ENCODE measurements at regions of chr13 and their contacts with region 1.

Region 1: DNA sequence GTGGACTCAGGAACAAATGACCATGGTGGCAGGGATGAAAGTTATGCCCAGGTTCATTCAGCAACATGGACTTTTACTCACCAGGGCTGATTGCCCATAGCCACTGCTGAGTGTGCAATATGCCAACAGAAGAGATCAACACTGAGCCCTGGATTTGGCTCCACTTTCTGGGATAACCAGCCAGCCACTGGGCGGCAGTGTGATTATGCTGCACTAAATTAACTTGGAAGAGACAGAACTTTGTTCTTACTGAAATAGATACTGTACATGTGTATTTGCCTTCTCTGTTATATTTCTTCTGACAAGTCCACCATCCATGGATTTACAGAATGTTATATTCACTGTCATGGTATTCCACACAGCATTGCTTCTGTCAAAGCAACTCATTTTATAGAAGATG is 257.4 kb downstream of the TDRD3 start:
- DNase-seq: peak in 1 of 2 experiments; percentile 42
- H3K4me3 ChIP-seq: no peak overlapping the region
- H3K4me3 Mint-ChIP-seq: no peak overlapping the region
- H3K27ac Mint-ChIP-seq: no peak overlapping the region
- H3K4me1 ChIP-seq: no peaks in the 10 kb centered on the region
- H3K4me1 Mint-ChIP-seq: no peaks in the 10 kb centered on the region
- H3K27me3 ChIP-seq: no peaks in the 10 kb centered on the region; the same call in 1 of the 2 replicates
- H3K27me3 Mint-ChIP-seq: peaks cover 20% of the 10 kb centered on the region
- CTCF ChIP-seq: peak; percentile 58 to 77

Region 2: DNA sequence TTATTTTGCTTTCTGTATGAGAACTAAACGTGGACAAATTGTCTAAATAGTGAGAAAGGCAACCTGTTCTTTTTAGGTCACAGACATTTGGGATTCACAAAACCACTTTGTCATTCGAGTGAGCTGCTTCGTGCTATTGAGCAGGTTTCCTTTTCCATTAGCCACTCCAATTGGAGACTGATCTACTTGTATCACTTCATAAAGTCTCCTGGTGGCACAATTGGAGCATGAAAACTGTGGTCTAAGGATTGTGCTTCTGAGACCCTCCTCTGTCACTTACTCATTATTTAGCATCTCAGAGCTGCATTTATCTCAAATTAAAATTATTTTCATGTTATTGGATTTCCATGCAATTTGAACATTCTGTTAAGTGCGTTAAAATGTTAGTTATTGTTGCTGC is 140.3 kb after region 1 on chr13:
- CTCF ChIA-PET with region 1: no interaction called
- POLR2A ChIA-PET with region 1: no interaction called
- intact Hi-C with region 1: loop called (anchors 1 kb)
- DNase-seq: no peak
- H3K4me3 ChIP-seq: no peak overlapping the region
- H3K4me3 Mint-ChIP-seq: no peak overlapping the region
- H3K27ac Mint-ChIP-seq: no peak overlapping the region
- H3K4me1 ChIP-seq: no peaks in the 10 kb centered on the region
- H3K4me1 Mint-ChIP-seq: no peaks in the 10 kb centered on the region
- H3K27me3 ChIP-seq: no peaks in the 10 kb centered on the region
- H3K27me3 Mint-ChIP-seq: no peaks in the 10 kb centered on the region
- CTCF ChIP-seq: no peak

Region 3: GRCh38 chr13:60990032-60990733 is 335.8 kb after region 1 on chr13:
- CTCF ChIA-PET with region 1: no interaction called
- POLR2A ChIA-PET with region 1: no interaction called
- intact Hi-C with region 1: loop called (anchors 1 kb)
- DNase-seq: peak in 1 of 2 experiments; percentile 40
- H3K4me3 ChIP-seq: no peak overlapping the region
- H3K4me3 Mint-ChIP-seq: no peak overlapping the region
- H3K27ac Mint-ChIP-seq: no peak overlapping the region
- H3K4me1 ChIP-seq: no peaks in the 10 kb centered on the region
- H3K4me1 Mint-ChIP-seq: no peaks in the 10 kb centered on the region
- H3K27me3 ChIP-seq: no peaks in the 10 kb centered on the region; the same call in 1 of the 2 replicates
- H3K27me3 Mint-ChIP-seq: no peaks in the 10 kb centered on the region
- CTCF ChIP-seq: peak; percentile 16 to 39

Region 4: DNA sequence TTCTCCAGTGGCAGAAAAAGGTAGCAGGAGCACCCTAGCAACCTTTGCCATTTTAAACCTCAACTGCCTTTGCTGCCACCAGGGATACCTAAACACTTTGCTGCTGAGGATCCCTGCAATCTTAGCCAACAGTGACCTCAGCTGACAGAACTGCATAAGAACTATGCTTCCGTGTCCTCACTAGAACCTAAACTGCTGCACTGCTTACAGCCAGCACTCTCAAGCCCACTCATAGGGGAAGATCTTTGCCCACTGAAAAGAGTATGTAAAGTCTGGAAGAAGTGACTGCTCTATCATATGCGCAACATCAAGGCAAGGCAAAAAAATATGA is 1031.2 kb after region 1 on chr13:
- CTCF ChIA-PET with region 1: no interaction called
- POLR2A ChIA-PET with region 1: no interaction called
- intact Hi-C with region 1: loop called (anchors 1 kb)
- DNase-seq: peak; percentile 48 to 54
- H3K4me3 ChIP-seq: no peak overlapping the region
- H3K4me3 Mint-ChIP-seq: no peak overlapping the region
- H3K27ac Mint-ChIP-seq: no peak overlapping the region
- H3K4me1 ChIP-seq: no peaks in the 10 kb centered on the region
- H3K4me1 Mint-ChIP-seq: no peaks in the 10 kb centered on the region
- H3K27me3 ChIP-seq: no peaks in the 10 kb centered on the region
- H3K27me3 Mint-ChIP-seq: no peaks in the 10 kb centered on the region
- CTCF ChIP-seq: peak in 1 of 2 experiments; percentile 58

Measured in Caco-2 (cell line).